Activated CD4-positive, alpha-beta T cell treated with anti-CD3 and anti-CD28 coated beads, Interleukin-2, amount 10 ng/mL, durations not matched to agents 24 days and 14 days (primary cell): ENCODE measurements at regions of chr4 and their contacts with region 1.

Region 1: GRCh38 chr4:39977489-39978377 is at the start of gene PDS5A:
- DNase-seq: peak; percentile 98
- H3K4me3 Mint-ChIP-seq: peak within 1 kb of the TSS; percentile 95
- H3K27ac Mint-ChIP-seq: peak within 1 kb of the TSS; percentile 91
- H3K4me1 Mint-ChIP-seq: peaks cover 27% of the 10 kb centered on the region
- H3K27me3 Mint-ChIP-seq: no peaks in the 10 kb centered on the region
- total RNA-seq, gene PDS5A: 126 and 128 TPM in 2 replicates

Region 2: DNA sequence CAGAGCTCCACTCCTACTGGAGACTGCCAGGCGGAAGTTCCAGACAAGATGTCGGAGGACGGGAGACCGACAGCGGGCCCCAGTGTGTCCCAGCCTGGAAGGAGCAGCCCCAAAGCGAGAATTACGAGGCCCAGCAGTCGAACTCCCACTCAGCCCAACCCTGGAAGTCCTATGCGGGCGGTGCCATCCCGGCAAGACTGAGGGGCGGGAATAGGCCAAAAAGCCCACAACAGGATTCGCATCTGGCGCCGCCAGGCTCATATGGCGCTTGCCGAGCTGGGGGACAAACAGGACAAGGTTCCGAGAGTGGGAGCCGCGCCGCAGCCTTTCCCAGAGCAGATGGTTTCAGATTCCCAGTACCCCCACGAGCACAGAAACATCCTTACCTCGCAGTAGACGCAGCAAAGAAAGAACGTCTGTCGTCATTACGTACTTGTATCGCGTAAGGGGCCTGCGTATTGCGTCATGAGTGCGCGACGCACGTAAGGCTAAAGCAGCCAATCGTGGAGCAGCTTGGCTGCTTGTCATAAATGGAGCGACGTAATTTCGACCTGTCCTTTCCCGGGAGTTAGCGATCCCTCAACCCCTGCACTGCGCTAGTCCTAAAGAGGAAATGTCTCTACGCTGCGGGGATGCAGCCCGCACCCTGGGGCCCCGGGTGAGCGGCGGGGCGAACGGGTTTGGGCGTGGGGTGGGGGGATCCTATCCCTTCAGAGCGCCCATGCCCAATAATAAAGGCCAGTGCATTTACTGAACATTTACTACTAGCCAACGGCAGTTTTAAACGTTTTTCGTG is 519.0 kb before region 1 on chr4 and contains the starts of genes LIAS and RPL9:
- intact Hi-C with region 1: loop called (anchors 2 kb)
- DNase-seq: peak; percentile 98
- H3K4me3 Mint-ChIP-seq: peak within 1 kb of the TSS; percentile 89
- H3K27ac Mint-ChIP-seq: peak within 1 kb of the TSS; percentile 98
- H3K4me1 Mint-ChIP-seq: peaks cover 35% of the 10 kb centered on the region
- H3K27me3 Mint-ChIP-seq: peaks cover 2% of the 10 kb centered on the region
- total RNA-seq, gene LIAS: 27.7 and 29.2 TPM in 2 replicates
- total RNA-seq, gene RPL9: 1,785 and 1,789 TPM in 2 replicates

Region 3: GRCh38 chr4:39527273-39528060 is 450.3 kb before region 1 on chr4 and contains the start of gene UGDH:
- intact Hi-C with region 1: loop called (anchors 5 kb)
- DNase-seq: peak; percentile 99
- H3K4me3 Mint-ChIP-seq: peak within 1 kb of the TSS; percentile 98
- H3K27ac Mint-ChIP-seq: peak within 1 kb of the TSS; percentile 95
- H3K4me1 Mint-ChIP-seq: peaks cover 20% of the 10 kb centered on the region
- H3K27me3 Mint-ChIP-seq: no peaks in the 10 kb centered on the region
- total RNA-seq, gene UGDH: 23.1 and 29.2 TPM in 2 replicates

Region 4: DNA sequence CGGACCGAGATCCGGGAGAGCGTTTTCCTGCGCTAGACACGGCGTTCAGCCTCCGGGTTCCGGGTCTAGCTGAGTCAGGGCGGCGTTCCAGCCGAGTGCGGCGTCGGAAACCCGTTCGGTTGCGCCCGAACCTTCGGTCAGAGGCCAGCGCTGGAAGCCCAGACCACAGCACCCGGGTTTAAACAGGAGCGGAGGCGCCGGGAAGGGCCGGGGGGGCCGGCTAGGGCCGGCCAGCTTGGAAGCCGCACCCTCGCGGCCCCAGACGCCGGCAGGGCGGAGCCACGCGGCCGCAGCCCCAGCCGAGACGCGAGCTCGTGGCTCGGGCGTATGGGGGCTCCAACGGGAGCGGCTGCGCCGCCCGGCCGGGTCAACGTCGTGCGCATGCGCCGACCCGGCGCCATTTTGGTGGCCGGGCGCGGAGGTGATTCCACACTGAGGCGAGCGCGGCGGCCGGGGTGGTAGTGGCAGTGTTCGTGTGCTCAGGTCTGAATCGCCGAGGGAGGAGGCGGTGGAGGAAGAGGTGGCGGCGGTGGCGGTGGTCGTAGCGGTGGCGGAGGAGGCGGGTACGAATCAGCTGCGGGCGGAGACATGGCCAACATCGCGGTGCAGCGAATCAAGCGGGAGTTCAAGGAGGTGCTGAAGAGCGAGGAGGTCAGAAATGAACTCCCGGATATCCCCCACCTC is 279.9 kb before region 1 on chr4 and contains the start of gene UBE2K:
- intact Hi-C with region 1: loop called (anchors 1 kb)
- DNase-seq: peak; percentile 98
- H3K4me3 Mint-ChIP-seq: peak within 1 kb of the TSS; percentile 99
- H3K27ac Mint-ChIP-seq: peak within 1 kb of the TSS; percentile 99
- H3K4me1 Mint-ChIP-seq: peaks cover 24% of the 10 kb centered on the region
- H3K27me3 Mint-ChIP-seq: no peaks in the 10 kb centered on the region
- total RNA-seq, gene UBE2K: 99.4 and 106 TPM in 2 replicates

Region 5: DNA sequence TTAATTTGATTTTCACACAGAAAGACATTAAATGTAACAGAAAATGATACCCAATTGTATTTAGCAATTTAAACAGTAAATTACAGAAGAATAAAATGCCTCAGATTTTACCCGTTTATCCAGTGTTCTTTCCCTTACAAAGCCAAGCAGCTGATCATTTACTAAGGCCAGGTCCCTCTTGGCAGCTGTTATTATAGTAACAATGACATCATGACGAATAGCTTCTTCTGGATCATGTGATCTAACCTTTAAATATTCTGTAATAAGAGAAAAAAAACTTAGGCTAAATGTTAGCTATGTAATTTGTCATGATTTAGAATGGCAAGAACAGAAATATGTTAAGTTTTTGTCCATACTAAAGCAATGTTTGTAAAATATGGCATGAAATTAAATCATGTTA is 69.4 kb before region 1 on chr4:
- intact Hi-C with region 1: loop called (anchors 5 kb)
- DNase-seq: no peak
- H3K4me3 Mint-ChIP-seq: no peak overlapping the region
- H3K27ac Mint-ChIP-seq: no peak overlapping the region
- H3K4me1 Mint-ChIP-seq: no peaks in the 10 kb centered on the region
- H3K27me3 Mint-ChIP-seq: no peaks in the 10 kb centered on the region

Region 6: DNA sequence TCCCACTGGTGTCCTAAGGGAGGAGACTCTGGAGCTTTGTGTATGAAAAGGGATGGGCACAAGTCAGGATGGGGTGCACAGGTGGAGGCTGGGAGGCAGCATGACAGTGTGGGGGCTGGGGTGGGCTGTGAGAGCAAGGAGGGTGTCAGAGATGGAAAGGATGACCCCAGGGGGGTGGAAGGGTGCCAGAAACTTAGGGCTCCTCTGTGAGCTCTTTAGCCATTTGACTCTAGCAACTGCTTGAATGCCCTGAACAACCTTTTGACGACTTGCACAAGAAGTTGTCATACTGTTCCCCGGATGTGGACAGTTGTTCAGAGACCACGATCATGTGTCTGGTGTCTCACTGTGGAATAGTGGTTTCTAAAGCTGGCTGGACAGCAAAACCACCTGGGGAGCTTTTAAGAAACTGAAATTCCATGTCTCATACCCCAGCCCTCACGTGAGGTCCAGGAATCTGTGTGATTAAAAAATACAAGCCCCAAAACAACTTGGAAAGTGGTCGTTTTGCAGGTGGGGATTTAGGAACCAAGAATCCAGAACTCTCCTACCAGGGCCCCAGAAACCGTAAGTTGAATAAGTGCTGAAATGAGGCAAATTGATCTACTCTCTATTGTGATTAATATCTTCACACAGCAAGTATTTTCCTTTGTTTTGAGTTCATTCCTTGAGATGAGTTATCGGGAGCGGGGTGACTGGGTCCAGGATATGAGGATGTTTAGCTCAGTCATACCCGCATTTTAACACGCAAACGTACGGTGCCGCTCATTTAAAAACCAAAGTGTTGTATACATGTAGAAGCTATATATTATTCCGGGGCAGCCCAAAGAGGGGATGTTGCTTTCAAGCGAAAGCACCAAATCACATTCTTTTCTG is 222.5 kb after region 1 on chr4:
- intact Hi-C with region 1: loop called (anchors 5 kb)
- DNase-seq: peak; percentile 93
- H3K4me3 Mint-ChIP-seq: peak overlapping the region; percentile 93
- H3K27ac Mint-ChIP-seq: peak overlapping the region; percentile 94
- H3K4me1 Mint-ChIP-seq: peaks cover 44% of the 10 kb centered on the region
- H3K27me3 Mint-ChIP-seq: no peaks in the 10 kb centered on the region